ENCODE measurements at regions of chr14 and their contacts with region 1.

Region 1: GRCh38 chr14:102516531-102517415 is 7.2 kb upstream of the ANKRD9 start:
- DNase-seq: peak; percentile 35
- H3K4me3 ChIP-seq: peak overlapping the region; percentile 35 to 73 (median 54)
- H3K27ac ChIP-seq: no peak overlapping the region
- H3K4me1 ChIP-seq: peaks cover 6% of the 10 kb centered on the region
- H3K27me3 ChIP-seq: no peaks in the 10 kb centered on the region
- CTCF ChIP-seq: peak; percentile 55 to 63

Region 2: GRCh38 chr14:102362545-102363181 is 154.1 kb before region 1 on chr14 and contains the starts of genes CINP and TECPR2:
- CTCF ChIA-PET with region 1: no interaction called
- dilution Hi-C with region 1: no loop called
- in situ Hi-C with region 1: no loop called
- intact Hi-C with region 1: loop called (anchors 5 kb)
- DNase-seq: peak; percentile 94
- H3K4me3 ChIP-seq: peak within 1 kb of the TSS; percentile 85 to 92 (median 88)
- H3K27ac ChIP-seq: peak within 1 kb of the TSS; percentile 96
- H3K4me1 ChIP-seq: peaks cover 14% of the 10 kb centered on the region
- H3K27me3 ChIP-seq: no peaks in the 10 kb centered on the region
- CTCF ChIP-seq: no peak
- total RNA-seq, gene CINP: 36.0 to 44.8 TPM
- total RNA-seq, gene TECPR2: 26.3 to 27.5 TPM

Region 3: DNA sequence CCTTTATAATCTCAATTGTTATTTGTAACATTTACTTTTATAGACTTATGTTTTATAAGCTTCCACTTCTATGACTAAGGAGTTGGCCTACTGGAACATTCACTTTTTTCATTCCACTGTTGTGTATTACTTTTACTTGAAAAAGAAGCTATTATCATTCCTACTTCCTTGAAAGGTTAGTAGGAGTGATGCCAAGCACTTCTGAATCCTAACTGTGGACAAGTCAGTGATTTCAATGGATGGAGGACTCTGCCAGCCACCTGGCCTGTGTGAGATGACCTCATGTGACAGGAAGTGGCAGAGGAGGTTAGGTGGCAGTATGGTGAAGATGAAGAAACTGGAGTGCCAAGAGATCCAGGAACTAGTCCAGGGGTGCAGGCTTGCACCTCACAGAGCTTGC is 108.0 kb before region 1 on chr14:
- CTCF ChIA-PET with region 1: no interaction called
- dilution Hi-C with region 1: no loop called
- in situ Hi-C with region 1: no loop called
- intact Hi-C with region 1: no loop called
- DNase-seq: no peak
- H3K4me3 ChIP-seq: no peak overlapping the region
- H3K27ac ChIP-seq: no peak overlapping the region
- H3K4me1 ChIP-seq: no peaks in the 10 kb centered on the region
- H3K27me3 ChIP-seq: no peaks in the 10 kb centered on the region
- CTCF ChIP-seq: no peak

Region 4: GRCh38 chr14:102610968-102611811 is 94.4 kb after region 1 on chr14:
- CTCF ChIA-PET with region 1: interaction called, 11 read pairs
- dilution Hi-C with region 1: no loop called
- in situ Hi-C with region 1: no loop called
- intact Hi-C with region 1: no loop called
- DNase-seq: no peak
- H3K4me3 ChIP-seq: no peak overlapping the region
- H3K27ac ChIP-seq: no peak overlapping the region
- H3K4me1 ChIP-seq: no peaks in the 10 kb centered on the region
- H3K27me3 ChIP-seq: no peaks in the 10 kb centered on the region
- CTCF ChIP-seq: no peak

Region 5: DNA sequence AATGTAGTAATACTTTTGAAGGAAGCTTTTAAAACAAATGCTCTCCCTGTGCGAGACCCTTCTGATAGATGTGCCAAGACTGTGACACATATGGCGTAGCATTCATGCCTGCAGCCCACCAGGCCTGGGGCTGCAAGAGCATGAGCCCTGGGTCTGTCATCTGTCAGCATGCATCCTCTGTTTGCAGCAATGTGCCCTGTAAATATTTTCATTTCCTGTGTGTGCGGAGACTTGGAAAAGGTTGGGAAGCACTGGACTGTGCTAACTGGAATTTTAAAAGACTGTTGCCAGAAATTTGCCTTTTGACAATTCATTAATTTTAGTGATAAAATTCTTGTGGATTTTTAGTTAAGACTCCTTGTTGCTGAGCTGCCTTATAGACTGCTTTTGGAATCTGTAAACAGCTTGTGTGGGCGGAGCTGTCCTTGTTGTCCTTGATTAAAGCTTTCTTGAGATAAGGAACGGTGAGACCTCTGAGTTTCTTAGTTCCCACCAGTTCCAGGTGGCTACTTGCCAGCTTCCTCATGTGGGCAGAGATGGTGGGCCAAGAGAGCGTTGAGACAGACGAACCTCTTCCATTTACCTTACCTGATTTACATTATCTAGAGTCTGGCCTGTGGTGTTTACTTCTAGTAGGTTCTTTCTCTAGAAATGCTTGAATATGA is 891.9 kb after region 1 on chr14:
- CTCF ChIA-PET with region 1: no interaction called
- dilution Hi-C with region 1: no loop called
- in situ Hi-C with region 1: no loop called
- intact Hi-C with region 1: no loop called
- DNase-seq: no peak
- H3K4me3 ChIP-seq: no peak overlapping the region
- H3K27ac ChIP-seq: no peak overlapping the region
- H3K4me1 ChIP-seq: peaks cover 1% of the 10 kb centered on the region
- H3K27me3 ChIP-seq: no peaks in the 10 kb centered on the region
- CTCF ChIP-seq: no peak

Measured in mammary epithelial cell (primary cell).